Cardiac septum (tissue), 1 donor: ENCODE measurements at regions of chr10 and their contacts with region 1.

Region 1: GRCh38 chr10:86668297-86669165 is at the start of gene LDB3:
- DNase-seq: peak; percentile 92
- total RNA-seq, gene LDB3: 1,178 TPM

Region 2: DNA sequence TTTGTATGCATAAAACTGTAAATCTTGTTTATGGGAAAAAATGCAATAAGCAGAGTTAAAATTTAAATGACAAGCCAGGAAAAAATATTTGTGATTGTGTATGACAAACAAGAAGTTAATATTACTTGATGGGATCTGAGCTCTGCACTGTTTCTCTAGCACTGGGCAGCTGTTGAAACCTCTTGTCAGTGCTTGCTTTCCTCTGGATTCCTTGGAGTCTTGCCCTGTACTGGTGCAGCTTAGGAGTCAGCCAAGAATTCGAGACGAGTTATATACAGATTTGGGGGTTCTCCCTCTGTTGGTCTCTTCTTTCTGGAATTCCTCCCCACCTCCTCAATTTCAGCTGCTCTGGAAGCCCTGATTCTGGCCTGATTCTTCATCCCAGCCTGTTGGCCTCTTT is 38.5 kb before region 1 on chr10:
- intact Hi-C with region 1: loop called (anchors 1 kb)
- DNase-seq: no peak

Region 3: GRCh38 chr10:86684331-86685097 is 16.0 kb after region 1 on chr10:
- intact Hi-C with region 1: loop called (anchors 1 kb)
- DNase-seq: peak; percentile 88

Region 4: DNA sequence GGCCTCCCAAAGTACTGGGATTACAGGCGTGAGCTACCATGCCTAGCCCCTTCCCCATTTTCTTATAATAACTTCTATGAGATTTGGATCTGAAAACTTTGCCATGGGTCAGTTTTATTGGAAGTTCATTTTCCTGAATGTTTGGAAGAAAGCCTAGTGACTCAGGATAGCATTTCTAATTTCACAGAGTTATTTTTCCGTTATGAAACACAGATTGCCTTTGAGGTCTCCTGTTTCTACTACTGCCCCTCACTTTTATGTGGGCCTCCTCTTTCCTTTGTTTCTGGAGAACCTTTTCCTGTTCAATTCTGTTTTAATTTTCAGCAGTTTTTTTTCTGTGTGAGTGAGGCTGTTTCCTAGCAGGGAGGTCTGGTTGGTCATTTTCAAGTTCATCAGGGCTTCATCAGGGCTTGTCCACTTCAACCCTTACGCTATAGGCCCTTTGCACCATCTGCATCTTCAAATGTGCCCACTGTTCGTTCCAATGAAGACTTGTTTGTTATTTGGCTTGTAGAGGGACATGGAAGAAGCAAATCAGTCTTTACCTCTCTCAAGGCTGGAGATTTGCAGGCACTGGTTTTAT is 146.6 kb after region 1 on chr10:
- intact Hi-C with region 1: no loop called
- DNase-seq: no peak